ENCODE measurements at regions of chr19 and their contacts with region 1.

Region 1: GRCh38 chr19:12847159-12848139 is 9.1 kb downstream of the MAST1 start:
- DNase-seq: peak; percentile 87
- ATAC-seq: peak; percentile 99
- H3K4me3 ChIP-seq: peak overlapping the region in 4 of 5 experiments; percentile 18 to 35 (median 22)
- H3K4me3 Mint-ChIP-seq: peak overlapping the region; percentile 55
- H3K27ac ChIP-seq: no peak overlapping the region
- H3K27ac Mint-ChIP-seq: no peak overlapping the region
- H3K4me1 ChIP-seq: peaks cover 10% of the 10 kb centered on the region in 2 donors
- H3K4me1 Mint-ChIP-seq: peaks cover 6% of the 10 kb centered on the region
- H3K27me3 ChIP-seq: peaks cover 0 to 46% (median 12%) of the 10 kb centered on the region in 4 experiments
- H3K27me3 Mint-ChIP-seq: peaks cover 30% of the 10 kb centered on the region
- CTCF ChIP-seq: peak; percentile 100

Region 2: DNA sequence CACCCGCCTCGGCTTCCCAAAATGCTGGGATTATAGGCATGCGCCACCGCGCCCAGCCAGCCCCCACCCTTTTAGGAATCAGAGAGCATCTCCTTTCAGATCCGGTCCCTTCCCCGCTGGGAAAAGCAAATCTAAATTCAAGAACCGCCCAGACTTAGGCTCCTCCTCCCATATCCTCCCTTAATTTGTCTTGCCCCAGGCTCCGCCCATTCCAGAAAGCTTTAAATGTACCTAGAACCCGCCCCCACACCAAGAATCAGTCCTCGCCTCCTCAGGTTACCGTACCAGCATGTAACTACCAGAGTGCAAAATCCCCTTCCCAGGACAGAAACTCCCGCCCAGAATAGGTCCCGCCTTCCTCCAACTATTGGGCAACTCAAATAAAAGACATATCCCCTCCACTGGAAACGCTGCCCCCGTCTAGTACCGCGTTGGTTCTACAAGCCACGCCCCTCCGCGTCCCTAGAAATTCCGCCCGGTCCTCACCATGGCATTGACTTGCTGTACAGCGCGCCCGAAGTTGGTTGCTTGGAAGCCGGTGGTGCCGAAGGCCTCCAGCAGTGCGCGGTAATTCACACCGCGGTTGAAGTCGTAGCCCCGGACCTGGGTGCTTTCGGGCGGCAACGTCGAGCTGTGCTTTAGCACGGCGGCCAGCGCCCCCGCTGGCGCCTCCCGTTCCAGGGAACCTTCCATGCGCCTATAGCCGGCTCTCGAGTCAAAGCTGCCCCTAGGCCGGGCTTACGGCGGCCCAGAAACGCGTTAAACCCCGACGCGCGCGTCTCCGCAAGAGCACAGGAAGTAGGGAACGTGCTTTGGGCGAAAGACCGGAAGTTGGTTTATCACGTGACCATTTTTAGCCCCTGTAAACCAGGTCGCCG is 166.1 kb before region 1 on chr19 and contains the start of gene DHPS:
- CTCF ChIA-PET with region 1: interaction called, 30 read pairs
- POLR2A ChIA-PET with region 1: no interaction called
- intact Hi-C with region 1: loop called (anchors 1 kb)
- DNase-seq: peak; percentile 98
- ATAC-seq: peak; percentile 75
- H3K4me3 ChIP-seq: peak within 1 kb of the TSS; percentile 73 to 90 (median 86)
- H3K4me3 Mint-ChIP-seq: peak within 1 kb of the TSS; percentile 93
- H3K27ac ChIP-seq: peak within 1 kb of the TSS; percentile 89 to 95
- H3K27ac Mint-ChIP-seq: peak within 1 kb of the TSS; percentile 94
- H3K4me1 ChIP-seq: peaks cover 9 to 17% of the 10 kb centered on the region in 2 donors
- H3K4me1 Mint-ChIP-seq: peaks cover 24% of the 10 kb centered on the region
- H3K27me3 ChIP-seq: no peaks in the 10 kb centered on the region
- H3K27me3 Mint-ChIP-seq: no peaks in the 10 kb centered on the region
- CTCF ChIP-seq: no peak
- total RNA-seq, gene DHPS: 187 and 200 TPM in 2 replicates

Region 3: DNA sequence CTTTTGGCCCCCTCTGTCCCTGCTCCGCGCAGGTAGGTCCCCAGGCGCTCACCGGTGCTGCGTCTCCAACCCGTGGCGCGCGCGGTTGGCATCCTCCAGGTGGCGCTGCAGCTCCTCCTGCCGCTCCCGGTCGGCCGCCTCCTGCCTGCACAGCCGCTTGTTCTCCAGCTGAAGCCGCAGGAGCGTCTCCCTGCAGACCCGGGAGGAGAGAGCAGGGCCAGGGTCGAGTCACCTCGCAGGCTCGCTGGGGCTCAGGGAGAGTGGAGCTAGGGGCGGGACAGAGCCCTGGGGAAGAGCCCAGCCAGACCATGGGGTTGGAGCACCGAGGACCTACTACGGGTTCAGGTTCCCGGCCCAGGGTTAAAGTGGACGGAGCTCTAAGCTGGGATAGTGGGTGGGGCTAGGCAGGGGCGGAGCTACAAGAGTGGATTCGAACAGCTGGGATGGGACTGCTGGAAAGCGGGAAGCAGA is 81.4 kb before region 1 on chr19:
- CTCF ChIA-PET with region 1: interaction called, 353 read pairs
- POLR2A ChIA-PET with region 1: interaction called, 8 read pairs
- intact Hi-C with region 1: loop called (anchors 1 kb)
- DNase-seq: peak; percentile 87
- ATAC-seq: peak; percentile 65
- H3K4me3 ChIP-seq: no peak overlapping the region
- H3K4me3 Mint-ChIP-seq: no peak overlapping the region
- H3K27ac ChIP-seq: no peak overlapping the region
- H3K27ac Mint-ChIP-seq: no peak overlapping the region
- H3K4me1 ChIP-seq: peaks cover 6 to 8% of the 10 kb centered on the region in 2 donors
- H3K4me1 Mint-ChIP-seq: peaks cover 10% of the 10 kb centered on the region
- H3K27me3 ChIP-seq: no peaks in the 10 kb centered on the region
- H3K27me3 Mint-ChIP-seq: no peaks in the 10 kb centered on the region
- CTCF ChIP-seq: peak; percentile 90

Region 4: DNA sequence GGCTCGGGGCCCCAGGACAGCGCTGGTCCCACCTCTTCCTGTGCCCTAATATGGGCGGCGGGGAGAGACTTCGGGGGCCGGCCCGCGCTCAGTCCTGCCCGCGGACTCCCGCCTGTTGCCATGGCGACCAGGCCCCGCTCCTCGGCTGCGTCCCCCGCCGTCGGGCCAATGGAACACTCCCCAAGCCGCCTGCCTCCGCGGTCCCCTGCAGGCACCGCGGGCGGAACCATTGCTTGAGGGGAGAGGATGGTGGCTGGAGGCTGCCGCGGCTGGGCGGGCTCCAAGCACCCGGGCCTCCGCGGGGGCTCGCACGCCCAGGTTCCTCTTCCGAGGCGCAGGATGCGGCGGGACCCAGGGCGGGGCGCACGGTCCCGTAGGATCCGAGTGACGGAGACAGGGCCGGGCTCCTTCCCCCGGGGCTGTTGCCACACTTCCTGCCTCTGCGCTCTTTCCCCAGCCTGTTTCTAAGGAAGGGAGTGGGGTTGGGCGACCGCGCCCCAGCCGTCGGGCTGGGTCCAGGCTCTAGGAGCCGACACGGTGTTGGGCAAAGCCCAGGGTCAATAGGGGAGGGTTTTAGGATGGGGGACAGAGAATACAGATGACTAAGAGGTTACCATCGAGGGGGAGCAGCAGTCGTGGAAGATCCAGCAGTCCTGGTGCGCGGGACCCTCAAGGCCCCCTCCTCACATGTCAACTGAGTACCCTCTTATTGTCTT is 57.4 kb before region 1 on chr19:
- CTCF ChIA-PET with region 1: interaction called, 13 read pairs
- POLR2A ChIA-PET with region 1: no interaction called
- intact Hi-C with region 1: no loop called
- DNase-seq: peak; percentile 99
- ATAC-seq: peak; percentile 46
- H3K4me3 ChIP-seq: peak overlapping the region; percentile 94 to 99 (median 97)
- H3K4me3 Mint-ChIP-seq: peak overlapping the region; percentile 97
- H3K27ac ChIP-seq: peak overlapping the region; percentile 95 to 97
- H3K27ac Mint-ChIP-seq: peak overlapping the region; percentile 99
- H3K4me1 ChIP-seq: peaks cover 52 to 64% of the 10 kb centered on the region in 2 donors
- H3K4me1 Mint-ChIP-seq: peaks cover 41% of the 10 kb centered on the region
- H3K27me3 ChIP-seq: no peaks in the 10 kb centered on the region
- H3K27me3 Mint-ChIP-seq: no peaks in the 10 kb centered on the region
- CTCF ChIP-seq: no peak

Region 5: GRCh38 chr19:12806239-12807081 is 41.0 kb before region 1 on chr19 and contains the start of gene RNASEH2A:
- CTCF ChIA-PET with region 1: interaction called, 10 read pairs
- POLR2A ChIA-PET with region 1: interaction called, 4 read pairs
- intact Hi-C with region 1: no loop called
- DNase-seq: peak; percentile 93
- ATAC-seq: peak; percentile 95
- H3K4me3 ChIP-seq: peak within 1 kb of the TSS; percentile 51 to 82 (median 73)
- H3K4me3 Mint-ChIP-seq: peak within 1 kb of the TSS; percentile 96
- H3K27ac ChIP-seq: peak within 1 kb of the TSS; percentile 36 to 61
- H3K27ac Mint-ChIP-seq: peak within 1 kb of the TSS; percentile 87
- H3K4me1 ChIP-seq: peaks cover 14 to 23% of the 10 kb centered on the region in 2 donors
- H3K4me1 Mint-ChIP-seq: peaks cover 25% of the 10 kb centered on the region
- H3K27me3 ChIP-seq: no peaks in the 10 kb centered on the region
- H3K27me3 Mint-ChIP-seq: peaks cover 3% of the 10 kb centered on the region
- CTCF ChIP-seq: no peak
- total RNA-seq, gene RNASEH2A: 16.9 and 18.9 TPM in 2 replicates